ENCODE measurements at regions of chr6 and their contacts with region 1.

Region 1: GRCh38 chr6:44096612-44097011 is 30.6 kb downstream of the MRPL14 start:
- DNase-seq: peak; percentile 56 to 74
- ATAC-seq: peak; percentile 77 to 86
- H3K4me3 ChIP-seq: no peak overlapping the region
- H3K27ac ChIP-seq: peak overlapping the region in 1 of 4 donors; percentile 37
- H3K4me1 ChIP-seq: peaks cover 7 to 12% of the 10 kb centered on the region in 2 donors
- H3K27me3 ChIP-seq: no peaks in the 10 kb centered on the region
- CTCF ChIP-seq: peak; percentile 83 to 88 (median 86)
- POLR2A ChIP-seq: no peak

Region 2: DNA sequence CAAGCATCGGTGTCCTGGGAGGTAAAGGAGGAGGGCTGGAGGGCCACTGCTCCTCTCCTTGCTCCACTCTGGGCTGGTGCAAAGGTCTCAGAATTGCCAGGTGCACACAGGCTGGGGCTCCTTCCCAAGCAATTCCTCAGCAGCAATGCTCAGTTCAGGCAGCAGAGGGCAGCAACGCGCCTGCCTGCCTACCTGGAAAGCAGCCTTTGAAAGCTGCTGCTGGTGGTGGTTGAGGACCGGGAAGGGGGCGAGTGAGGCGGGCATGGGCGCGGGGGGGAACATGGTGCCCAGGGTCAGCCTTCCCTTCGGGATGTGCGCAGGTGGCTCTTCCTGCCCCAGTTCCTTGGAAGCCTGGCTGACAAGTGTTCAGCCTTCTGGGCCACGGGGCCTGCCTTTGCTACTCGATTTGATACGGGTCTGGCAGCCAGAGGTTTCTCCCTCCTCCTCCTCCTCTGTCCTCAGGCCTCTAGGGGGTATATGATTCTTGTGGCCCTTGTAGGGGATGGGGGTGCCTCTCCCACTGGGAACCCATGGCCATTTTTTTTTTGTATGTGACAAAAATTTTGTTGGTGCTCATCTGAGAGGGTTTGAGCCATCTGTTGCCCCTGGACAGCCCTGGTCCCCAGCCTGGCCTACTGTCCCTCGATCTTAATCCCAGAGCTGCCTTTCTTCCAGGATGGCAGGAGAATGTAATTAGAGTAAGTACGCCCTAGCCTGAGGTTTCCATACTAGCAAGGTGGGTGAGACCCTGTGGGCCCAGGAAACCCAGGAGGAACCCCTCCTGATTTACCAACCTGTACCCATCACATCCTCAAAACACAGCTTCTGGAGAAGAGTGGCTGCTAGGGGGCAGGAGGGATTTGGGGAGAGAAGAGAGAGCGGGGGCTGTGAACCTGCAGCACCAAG is 429.1 kb before region 1 on chr6:
- in situ Hi-C with region 1: loop called (anchors 25 kb)
- intact Hi-C with region 1: no loop called
- DNase-seq: peak; percentile 62 to 85
- ATAC-seq: peak; percentile 67 to 69
- H3K4me3 ChIP-seq: peak overlapping the region in 3 of 4 donors; percentile 17 to 30 (median 18)
- H3K27ac ChIP-seq: peak overlapping the region; percentile 95 to 97 (median 96)
- H3K4me1 ChIP-seq: peaks cover 54 to 59% of the 10 kb centered on the region in 2 donors
- H3K27me3 ChIP-seq: no peaks in the 10 kb centered on the region
- CTCF ChIP-seq: peak; percentile 98
- POLR2A ChIP-seq: peak in 1 of 2 donors; percentile 34

Region 3: DNA sequence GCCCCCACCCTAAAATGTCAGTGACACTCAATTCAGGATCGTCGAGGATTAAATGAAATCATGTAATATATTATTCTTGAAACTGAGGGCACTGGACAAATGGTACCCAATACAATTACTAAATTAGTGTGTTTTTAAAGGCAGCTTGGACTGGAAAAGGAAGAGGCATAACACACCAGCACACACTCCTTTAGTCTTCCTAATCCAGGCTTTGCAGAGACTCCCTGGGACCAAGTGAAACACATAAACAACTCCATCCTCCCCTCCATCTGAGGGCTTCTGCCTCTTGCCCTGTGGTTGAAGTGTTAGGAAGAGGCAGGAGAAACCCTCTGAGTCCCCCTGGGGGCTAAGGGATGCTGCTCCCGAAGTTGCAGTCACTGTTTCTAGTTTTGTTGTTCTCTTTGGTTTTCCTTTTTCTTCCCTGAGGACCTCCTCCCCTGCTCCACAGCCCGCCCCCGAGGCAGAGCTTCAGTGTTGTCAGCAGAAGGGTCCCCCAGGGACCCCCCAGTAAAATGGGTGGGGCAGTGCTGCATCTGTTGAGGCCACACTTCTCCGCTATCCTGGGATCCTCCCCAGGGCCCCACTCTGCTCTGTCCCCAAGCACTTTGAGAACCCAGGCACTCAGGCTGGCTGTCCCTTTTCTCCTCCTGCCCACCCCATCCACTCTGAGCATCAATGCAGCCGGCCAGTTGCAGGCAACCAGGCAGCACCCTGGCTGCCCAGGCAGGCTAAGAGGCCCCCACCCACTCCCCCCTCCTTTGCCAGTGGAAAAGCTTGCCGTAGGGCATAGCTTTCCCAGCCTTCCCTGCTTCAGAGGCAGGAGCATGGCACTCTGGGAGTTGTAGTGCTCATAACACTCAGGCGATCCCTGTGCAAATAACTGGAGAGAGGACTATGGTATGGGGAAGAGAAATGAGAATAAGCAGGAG is 36.7 kb after region 1 on chr6:
- in situ Hi-C with region 1: no loop called
- intact Hi-C with region 1: loop called (anchors 5 kb)
- DNase-seq: no peak
- ATAC-seq: peak; percentile 42 to 68
- H3K4me3 ChIP-seq: peak overlapping the region in 2 of 4 donors; percentile 9 to 11
- H3K27ac ChIP-seq: peak overlapping the region; percentile 1 to 59 (median 42)
- H3K4me1 ChIP-seq: peaks cover 21 to 27% of the 10 kb centered on the region in 2 donors
- H3K27me3 ChIP-seq: no peaks in the 10 kb centered on the region
- CTCF ChIP-seq: no peak
- POLR2A ChIP-seq: no peak

Region 4: DNA sequence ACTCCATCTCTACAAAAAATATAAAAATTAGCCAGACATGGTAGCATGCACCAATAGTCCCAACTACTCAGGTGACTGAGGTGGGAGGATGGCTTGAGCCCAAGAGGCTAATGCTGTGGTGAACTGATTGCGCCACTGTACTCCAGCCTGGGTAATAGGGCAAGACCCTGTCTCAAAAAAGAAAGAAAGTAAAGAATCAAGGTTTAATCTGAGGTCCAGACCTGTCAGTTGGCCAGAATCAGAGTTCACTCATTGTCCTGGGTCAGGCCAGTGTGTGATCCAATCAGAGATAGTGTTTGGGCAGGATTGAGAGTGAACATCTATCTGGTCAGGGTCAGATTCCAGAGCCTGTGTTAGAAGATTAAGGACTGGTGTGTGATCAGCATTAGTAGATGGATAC is 46.2 kb after region 1 on chr6:
- in situ Hi-C with region 1: loop called in 3 of 4 experiments (anchors 5 kb)
- intact Hi-C with region 1: no loop called
- DNase-seq: no peak
- ATAC-seq: no peak
- H3K4me3 ChIP-seq: no peak overlapping the region
- H3K27ac ChIP-seq: no peak overlapping the region
- H3K4me1 ChIP-seq: no peaks in the 10 kb centered on the region
- H3K27me3 ChIP-seq: no peaks in the 10 kb centered on the region
- CTCF ChIP-seq: no peak
- POLR2A ChIP-seq: no peak

Region 5: GRCh38 chr6:44151348-44152108 is 54.9 kb after region 1 on chr6:
- in situ Hi-C with region 1: loop called in 2 of 4 experiments (anchors 5 kb)
- intact Hi-C with region 1: loop called (anchors 1 kb)
- DNase-seq: peak; percentile 38 to 68
- ATAC-seq: peak; percentile 78 to 83
- H3K4me3 ChIP-seq: no peak overlapping the region
- H3K27ac ChIP-seq: no peak overlapping the region
- H3K4me1 ChIP-seq: peaks cover 0 to 3% of the 10 kb centered on the region in 2 donors
- H3K27me3 ChIP-seq: no peaks in the 10 kb centered on the region
- CTCF ChIP-seq: peak; percentile 95 to 100 (median 99)
- POLR2A ChIP-seq: no peak

Region 6: GRCh38 chr6:44192428-44193041 is 95.9 kb after region 1 on chr6:
- in situ Hi-C with region 1: no loop called
- intact Hi-C with region 1: no loop called
- DNase-seq: no peak
- ATAC-seq: no peak
- H3K4me3 ChIP-seq: no peak overlapping the region
- H3K27ac ChIP-seq: no peak overlapping the region
- H3K4me1 ChIP-seq: no peaks in the 10 kb centered on the region
- H3K27me3 ChIP-seq: no peaks in the 10 kb centered on the region
- CTCF ChIP-seq: no peak
- POLR2A ChIP-seq: no peak

Region 7: DNA sequence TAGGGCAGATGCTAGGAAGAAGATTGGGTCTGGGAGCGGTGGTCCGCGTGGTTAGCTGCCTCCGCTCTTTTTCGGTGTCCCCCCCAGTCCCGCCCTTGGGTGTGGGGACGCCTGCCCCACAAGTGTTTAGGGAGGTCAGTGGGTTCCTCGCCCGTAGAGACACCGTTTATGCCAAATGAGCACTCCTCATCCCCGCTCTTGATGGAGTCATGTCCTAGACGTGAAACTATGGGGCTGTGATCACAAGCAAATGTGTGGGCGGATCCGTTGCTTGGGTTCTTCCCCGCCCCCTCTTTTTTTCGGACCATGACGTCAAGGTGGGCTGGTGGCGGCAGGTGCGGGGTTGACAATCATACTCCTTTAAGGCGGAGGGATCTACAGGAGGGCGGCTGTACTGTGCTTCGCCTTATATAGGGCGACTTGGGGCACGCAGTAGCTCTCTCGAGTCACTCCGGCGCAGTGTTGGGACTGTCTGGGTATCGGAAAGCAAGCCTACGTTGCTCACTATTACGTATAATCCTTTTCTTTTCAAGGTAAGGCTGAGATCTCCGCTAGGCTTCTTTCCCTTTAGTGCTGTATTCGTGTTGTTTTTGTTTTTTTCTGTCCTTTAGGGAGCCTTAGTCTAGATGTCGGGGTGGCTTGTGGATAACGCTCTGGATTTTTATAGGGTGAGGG is 150.2 kb after region 1 on chr6 and contains the start of gene HSP90AB1:
- in situ Hi-C with region 1: loop called in 1 of 4 experiments (anchors 25 kb)
- intact Hi-C with region 1: no loop called
- DNase-seq: peak; percentile 97 to 99
- ATAC-seq: peak; percentile 86 to 88
- H3K4me3 ChIP-seq: peak within 1 kb of the TSS; percentile 78 to 98 (median 88)
- H3K27ac ChIP-seq: peak within 1 kb of the TSS; percentile 93 to 99 (median 98)
- H3K4me1 ChIP-seq: peaks cover 25 to 27% of the 10 kb centered on the region in 2 donors
- H3K27me3 ChIP-seq: no peaks in the 10 kb centered on the region
- CTCF ChIP-seq: peak in 1 of 5 experiments; percentile 26
- POLR2A ChIP-seq: peak; percentile 99
- total RNA-seq, gene HSP90AB1: 878 to 1,576 (median 1,106) TPM

Region 8: DNA sequence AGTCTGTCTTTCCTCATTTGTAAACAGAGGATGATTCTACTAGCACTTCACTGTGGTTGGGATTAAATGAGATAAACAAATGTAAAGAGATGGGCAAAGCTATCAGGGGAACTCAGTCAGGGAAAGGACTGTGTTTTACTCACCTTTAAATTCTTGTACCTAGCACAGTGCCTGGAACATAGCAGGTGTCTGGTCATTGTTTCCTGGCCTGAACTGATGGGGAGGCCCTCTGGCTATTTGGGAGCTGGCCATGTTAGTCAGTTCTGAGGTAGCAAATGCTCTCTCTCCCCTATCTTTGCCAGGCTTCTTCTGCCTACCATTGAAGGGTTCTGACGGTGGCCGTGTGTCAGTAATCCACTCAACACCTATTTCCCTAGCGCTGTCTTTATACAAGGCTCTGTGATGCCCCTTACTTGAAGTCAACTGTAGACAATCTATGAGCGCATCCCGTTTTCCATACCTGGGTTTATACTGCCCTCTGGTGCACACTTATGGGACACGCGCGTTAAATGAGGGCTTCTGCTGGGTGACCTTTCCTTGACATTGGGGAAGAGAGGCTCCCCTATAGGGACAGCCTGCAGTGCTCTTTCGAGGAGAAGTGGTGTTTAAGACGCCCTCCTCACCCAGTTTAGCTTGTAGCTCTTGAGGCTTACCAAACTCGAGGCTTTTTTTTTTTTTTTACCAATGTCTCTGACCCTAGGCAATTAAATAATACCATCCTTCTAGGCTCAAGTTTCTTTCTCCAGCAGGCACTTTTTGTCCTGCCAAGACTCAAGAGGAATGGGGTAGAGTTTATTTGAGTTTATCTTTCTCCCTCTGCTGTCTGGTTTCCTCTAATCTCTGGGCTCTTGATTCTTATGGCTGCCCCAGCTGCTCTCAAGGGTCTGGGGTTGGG is 241.9 kb after region 1 on chr6:
- in situ Hi-C with region 1: no loop called
- intact Hi-C with region 1: loop called (anchors 5 kb)
- DNase-seq: peak; percentile 13 to 40
- ATAC-seq: peak; percentile 75 to 93
- H3K4me3 ChIP-seq: no peak overlapping the region
- H3K27ac ChIP-seq: no peak overlapping the region
- H3K4me1 ChIP-seq: no peaks in the 10 kb centered on the region
- H3K27me3 ChIP-seq: peaks cover 12 to 20% (median 16%) of the 10 kb centered on the region in 3 donors
- CTCF ChIP-seq: peak; percentile 37 to 73 (median 68)
- POLR2A ChIP-seq: no peak